ENCODE measurements at regions of chrX and their contacts with region 1.

Region 1: DNA sequence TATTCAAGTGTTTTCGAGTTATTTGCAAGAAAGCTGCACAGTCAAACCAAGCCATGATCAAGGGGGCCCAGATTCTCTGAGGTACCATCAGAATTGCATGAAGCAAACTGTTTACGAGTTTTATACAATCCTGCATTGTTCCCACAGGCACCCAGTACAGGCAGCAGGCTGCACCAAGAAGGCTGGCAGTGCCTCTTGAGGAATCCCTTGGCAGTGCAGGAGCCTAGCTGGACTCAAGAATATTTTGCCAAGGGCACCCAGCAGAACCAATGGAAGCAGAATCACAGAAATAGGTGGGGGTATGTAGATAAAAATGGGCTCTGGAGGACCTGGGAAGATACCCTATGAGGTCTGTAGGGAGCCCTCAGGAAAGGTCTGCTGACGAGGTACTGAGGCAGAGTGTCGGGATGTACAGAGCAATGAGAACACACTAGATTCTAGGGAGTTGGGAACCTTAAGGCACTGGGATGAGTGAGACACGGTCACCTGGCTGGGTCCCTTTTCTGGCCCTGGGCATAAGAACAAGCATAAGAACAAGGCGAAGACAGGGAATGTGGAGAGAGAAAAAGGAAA is 2.5 kb upstream of the PLP1 start:
- DNase-seq: no peak
- ATAC-seq: peak in 1 of 2 donors; percentile 61
- H3K4me3 ChIP-seq: no peak overlapping the region
- H3K27ac ChIP-seq: no peak overlapping the region
- H3K4me1 ChIP-seq: no peaks in the 10 kb centered on the region
- H3K27me3 ChIP-seq: peaks cover 0 to 3% (median 0%) of the 10 kb centered on the region in 3 donors
- CTCF ChIP-seq: peak in 2 of 5 experiments; percentile 28 to 43
- POLR2A ChIP-seq: no peak

Region 2: GRCh38 chrX:103711533-103712369 is 62.4 kb before region 1 on chrX:
- in situ Hi-C with region 1: no loop called
- intact Hi-C with region 1: loop called (anchors 1 kb)
- DNase-seq: peak in 1 of 2 donors; percentile 12
- ATAC-seq: peak; percentile 42 to 44
- H3K4me3 ChIP-seq: no peak overlapping the region
- H3K27ac ChIP-seq: no peak overlapping the region
- H3K4me1 ChIP-seq: no peaks in the 10 kb centered on the region
- H3K27me3 ChIP-seq: no peaks in the 10 kb centered on the region
- CTCF ChIP-seq: peak; percentile 12 to 69 (median 50)
- POLR2A ChIP-seq: no peak

Region 3: GRCh38 chrX:103904301-103904700 is 130.1 kb after region 1 on chrX:
- in situ Hi-C with region 1: no loop called
- intact Hi-C with region 1: no loop called
- DNase-seq: no peak
- ATAC-seq: no peak
- H3K4me3 ChIP-seq: no peak overlapping the region
- H3K27ac ChIP-seq: no peak overlapping the region
- H3K4me1 ChIP-seq: no peaks in the 10 kb centered on the region
- H3K27me3 ChIP-seq: no peaks in the 10 kb centered on the region
- CTCF ChIP-seq: no peak
- POLR2A ChIP-seq: no peak